ENCODE measurements at regions of chr19 and their contacts with region 1.

Region 1: GRCh38 chr19:57302020-57302465 is 18.2 kb upstream of the ZNF543 start:
- DNase-seq: no peak
- CTCF ChIP-seq: no peak

Region 2: DNA sequence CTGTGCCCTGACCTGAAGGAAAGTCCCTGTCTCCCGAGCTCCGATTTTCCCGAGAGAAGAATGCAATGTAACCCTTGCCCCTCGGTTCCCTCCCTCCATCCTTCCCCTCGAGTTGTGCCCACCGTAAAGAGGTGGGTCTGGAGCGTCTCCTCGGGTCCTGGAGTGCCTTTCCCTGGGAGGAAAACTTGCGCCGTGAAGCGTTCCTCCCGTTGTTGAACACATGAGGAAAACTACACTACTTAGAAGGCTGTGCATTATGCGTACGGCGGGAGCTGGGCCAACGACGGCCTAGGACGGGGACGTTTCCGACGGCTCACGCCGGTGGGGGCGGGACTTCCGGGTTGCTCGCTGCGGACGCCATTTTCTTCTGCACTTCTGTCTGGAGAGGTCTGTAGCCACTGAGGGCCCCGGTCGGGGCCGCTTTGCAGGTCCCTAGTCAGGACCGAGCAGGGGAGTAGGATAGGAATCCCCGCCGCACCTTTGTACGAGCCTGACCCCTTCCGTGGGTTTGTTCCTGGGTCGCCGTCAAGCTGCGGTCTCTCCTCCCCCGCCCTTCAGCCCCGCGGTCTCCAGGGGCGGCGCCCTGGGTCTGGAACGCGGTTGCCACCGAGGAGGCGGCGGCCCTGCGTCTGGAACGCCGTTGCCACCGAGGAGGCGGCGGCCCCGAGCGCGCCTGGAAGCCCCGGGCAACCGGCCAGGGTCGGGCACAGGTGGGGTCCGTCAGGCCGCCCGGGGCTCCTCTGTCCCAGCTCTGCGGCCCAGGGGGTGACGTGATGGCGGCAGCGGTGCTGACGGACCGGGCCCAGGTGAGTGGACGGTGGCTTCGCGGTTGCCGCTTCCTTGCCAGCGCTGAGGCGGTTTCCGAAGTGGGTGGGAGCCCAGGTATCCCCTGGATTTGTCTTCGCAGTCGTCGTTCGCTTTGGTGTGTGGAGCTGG is 110.6 kb before region 1 on chr19 and contains the start of gene ZNF264:
- CTCF ChIA-PET with region 1: no interaction called
- POLR2A ChIA-PET with region 1: no interaction called
- DNase-seq: peak; percentile 93
- CTCF ChIP-seq: peak; percentile 7

Region 3: GRCh38 chr19:57314146-57314545 is 12.1 kb after region 1 on chr19:
- CTCF ChIA-PET with region 1: interaction called, 10 read pairs
- POLR2A ChIA-PET with region 1: interaction called, 7 read pairs
- DNase-seq: no peak
- CTCF ChIP-seq: no peak

Measured in GM10248 (cell line).